Left ventricle myocardium inferior (tissue), 1 donor: ENCODE measurements at regions of chr15 and their contacts with region 1.

Region 1: GRCh38 chr15:36757189-36757814 is 177.9 kb downstream of the CDIN1 start:
- DNase-seq: no peak
- H3K4me3 ChIP-seq: no peak overlapping the region
- H3K27ac ChIP-seq: no peak overlapping the region
- H3K4me1 ChIP-seq: peaks cover 24% of the 10 kb centered on the region
- H3K27me3 ChIP-seq: no peaks in the 10 kb centered on the region
- CTCF ChIP-seq: no peak

Region 2: DNA sequence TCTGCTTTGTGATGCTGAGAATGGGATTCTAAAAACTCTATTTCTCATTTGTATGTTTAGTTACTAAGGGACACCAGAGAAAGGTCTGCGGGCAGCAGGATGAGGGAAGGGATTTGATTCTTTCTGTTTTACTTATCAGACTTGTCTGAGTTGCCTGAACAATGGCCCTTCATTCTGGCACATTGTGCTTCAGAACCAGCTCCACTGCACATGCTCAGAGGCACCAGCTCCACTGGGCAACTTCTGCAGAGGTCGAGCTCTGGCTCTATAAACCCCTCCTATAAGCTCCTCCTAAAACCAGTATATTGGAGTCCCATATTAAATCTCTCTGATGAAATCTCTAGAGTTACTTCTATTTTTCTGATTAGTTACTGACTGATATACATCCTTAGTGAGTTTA is 631.1 kb before region 1 on chr15:
- intact Hi-C with region 1: no loop called
- DNase-seq: no peak
- H3K4me3 ChIP-seq: no peak overlapping the region
- H3K27ac ChIP-seq: no peak overlapping the region
- H3K4me1 ChIP-seq: no peaks in the 10 kb centered on the region
- H3K27me3 ChIP-seq: no peaks in the 10 kb centered on the region
- CTCF ChIP-seq: no peak

Region 3: GRCh38 chr15:36808411-36809160 is 51.3 kb after region 1 on chr15:
- intact Hi-C with region 1: loop called (anchors 10 kb)
- DNase-seq: no peak
- H3K4me3 ChIP-seq: no peak overlapping the region
- H3K27ac ChIP-seq: peak overlapping the region; percentile 27
- H3K4me1 ChIP-seq: peaks cover 35% of the 10 kb centered on the region
- H3K27me3 ChIP-seq: no peaks in the 10 kb centered on the region
- CTCF ChIP-seq: no peak

Region 4: GRCh38 chr15:36855764-36856163 is 98.5 kb after region 1 on chr15:
- intact Hi-C with region 1: no loop called
- DNase-seq: no peak
- H3K4me3 ChIP-seq: no peak overlapping the region
- H3K27ac ChIP-seq: no peak overlapping the region
- H3K4me1 ChIP-seq: no peaks in the 10 kb centered on the region
- H3K27me3 ChIP-seq: no peaks in the 10 kb centered on the region
- CTCF ChIP-seq: no peak

Region 5: GRCh38 chr15:36875740-36876334 is 118.5 kb after region 1 on chr15:
- intact Hi-C with region 1: no loop called
- DNase-seq: no peak
- H3K4me3 ChIP-seq: no peak overlapping the region
- H3K27ac ChIP-seq: no peak overlapping the region
- H3K4me1 ChIP-seq: peaks cover 9% of the 10 kb centered on the region
- H3K27me3 ChIP-seq: peaks cover 15% of the 10 kb centered on the region
- CTCF ChIP-seq: no peak